Left colon (tissue), 2 donors: ENCODE measurements at regions of chr17 and their contacts with region 1.

Region 1: DNA sequence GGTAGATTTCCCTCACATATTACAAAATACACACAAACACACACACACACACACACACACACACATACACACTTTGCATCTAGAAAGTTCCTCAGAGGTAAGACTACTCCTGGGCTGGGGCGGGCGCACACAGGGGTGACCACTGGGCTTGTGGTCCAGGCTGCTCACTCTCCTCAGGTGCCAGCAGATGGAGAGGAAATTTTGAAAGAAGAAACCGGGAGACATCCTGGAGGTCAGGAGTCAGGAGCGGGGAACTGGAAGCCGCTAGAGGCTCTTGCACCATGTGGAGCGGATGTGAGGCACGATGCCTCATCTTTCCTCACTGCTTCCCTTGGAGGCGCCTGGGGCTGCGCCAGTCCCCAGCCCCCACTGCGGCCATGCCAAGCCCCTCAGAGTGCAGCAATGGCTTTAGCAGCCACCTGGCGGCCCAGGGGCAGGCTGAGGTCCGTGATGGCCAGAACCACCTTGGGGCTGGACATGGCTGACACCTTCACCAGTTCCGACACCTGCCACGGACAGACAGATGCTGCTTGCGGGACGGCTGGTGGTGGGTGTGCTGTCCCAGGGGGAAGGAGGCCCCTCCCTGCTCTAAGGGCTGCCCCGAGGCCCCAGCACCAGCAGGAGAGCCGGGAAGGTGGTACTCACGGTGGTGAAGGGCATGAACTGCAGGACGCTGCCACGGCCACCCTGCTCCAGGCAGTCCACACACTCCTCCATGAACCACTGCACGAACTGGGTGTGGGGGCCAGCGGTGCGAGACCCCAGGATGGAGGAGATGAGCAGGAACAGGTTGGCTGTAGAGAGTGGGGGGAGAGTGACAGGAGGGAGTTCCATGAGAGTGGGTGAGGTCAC is 4.1 kb downstream of the CSF3 start:
- DNase-seq: no peak
- ATAC-seq: no peak

Region 2: GRCh38 chr17:40113110-40113906 is 93.9 kb after region 1 on chr17:
- intact Hi-C with region 1: no loop called
- DNase-seq: peak; percentile 95 to 96
- ATAC-seq: peak; percentile 69

Region 3: DNA sequence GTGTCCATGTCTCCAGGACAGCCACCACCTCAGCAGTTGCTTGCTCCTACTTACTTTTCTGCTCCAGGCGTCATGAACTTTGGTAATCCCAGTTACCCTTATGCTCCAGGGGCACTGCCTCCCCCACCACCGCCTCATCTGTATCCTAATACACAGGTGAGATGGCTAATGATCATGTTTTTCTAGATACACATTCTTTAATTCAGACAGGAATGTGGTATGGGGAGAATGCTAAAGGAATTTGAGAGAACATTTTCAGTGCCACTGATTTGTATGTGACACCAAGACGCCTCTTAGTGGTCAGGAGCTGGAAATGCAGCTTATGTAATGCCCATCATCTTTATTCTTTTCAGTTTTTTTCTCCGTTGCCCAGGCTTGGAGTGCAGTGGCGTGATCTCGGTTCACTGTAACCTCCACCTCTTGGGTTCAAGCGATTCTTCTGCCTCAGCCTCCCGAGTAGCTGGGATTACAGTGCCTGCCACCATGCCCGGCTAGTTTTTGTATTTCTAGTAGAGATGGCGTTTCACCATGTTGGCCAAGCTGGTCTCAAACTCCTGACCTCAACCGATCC is 149.0 kb after region 1 on chr17:
- intact Hi-C with region 1: loop called (anchors 10 kb)
- DNase-seq: no peak
- ATAC-seq: peak; percentile 78